ENCODE measurements at regions of chr21 and their contacts with region 1.

Region 1: GRCh38 chr21:42878993-42879787 is at the start of gene WDR4:
- DNase-seq: peak; percentile 95 to 100
- H3K4me3 ChIP-seq: peak within 1 kb of the TSS; percentile 69 to 93 (median 85)
- H3K27ac ChIP-seq: peak within 1 kb of the TSS; percentile 98
- H3K4me1 ChIP-seq: peaks cover 0 to 3% (median under 1%) of the 10 kb centered on the region in 4 experiments; a peak in 2 of 7 replicates
- H3K27me3 ChIP-seq: no peaks in the 10 kb centered on the region
- CTCF ChIP-seq: no peak
- EP300 ChIP-seq: no peak; a peak in 1 of 3 replicates
- POLR2A ChIP-seq: peak; percentile 85 to 99
- RAD21 ChIP-seq: no peak
- total RNA-seq, gene WDR4: 43.1 and 47.8 TPM in 2 replicates

Region 2: DNA sequence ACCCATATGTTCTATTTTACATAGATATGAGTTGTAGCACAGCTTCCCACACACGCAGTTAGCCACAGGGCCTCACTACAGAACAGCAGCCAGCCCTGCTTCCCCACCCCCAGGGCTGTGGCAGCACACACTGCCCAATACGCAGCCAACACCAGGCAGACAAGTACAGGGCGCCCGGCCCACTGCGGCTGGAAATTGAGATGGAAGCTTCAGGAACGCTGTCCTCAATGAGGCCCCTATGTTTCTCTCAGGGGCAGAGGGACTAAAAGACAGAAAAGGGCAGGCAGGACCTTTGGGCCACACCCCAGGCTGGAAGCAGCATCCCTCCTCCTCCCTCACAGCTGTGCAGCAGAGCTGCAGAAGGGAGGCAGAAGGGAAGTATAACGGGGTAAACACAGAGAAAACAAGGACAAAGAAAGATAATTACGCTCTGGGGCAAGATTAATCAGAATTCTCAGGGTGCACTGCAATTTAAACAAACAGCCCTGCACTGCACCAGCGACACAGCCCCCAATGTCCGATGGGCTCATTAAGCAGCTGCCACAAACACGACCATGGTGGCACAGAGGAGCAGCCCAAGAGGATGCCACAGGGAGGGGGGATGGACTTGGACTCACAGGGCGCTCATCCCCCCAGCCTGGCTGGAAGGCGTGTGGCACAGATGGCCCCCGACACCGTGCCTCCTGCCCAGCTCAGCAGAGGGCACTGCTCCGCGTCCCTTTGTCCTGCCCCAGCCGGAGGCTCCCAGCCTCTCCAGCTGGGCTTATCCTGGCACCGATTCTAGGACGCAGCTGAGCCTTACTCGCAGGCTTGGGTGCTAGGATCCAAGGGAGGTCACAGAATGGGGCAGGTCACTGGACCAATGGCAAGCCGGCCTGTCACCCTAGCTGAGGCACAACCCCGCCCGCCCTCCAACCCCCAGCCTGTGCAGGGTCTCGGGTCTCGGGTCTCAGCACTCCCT is 14.1 kb before region 1 on chr21:
- CTCF ChIA-PET with region 1: interaction called, 5 read pairs
- POLR2A ChIA-PET with region 1: interaction called, 23 read pairs
- DNase-seq: no peak
- H3K4me3 ChIP-seq: no peak overlapping the region
- H3K27ac ChIP-seq: no peak overlapping the region
- H3K4me1 ChIP-seq: no peaks in the 10 kb centered on the region; a peak in 1 of 7 replicates
- H3K27me3 ChIP-seq: no peaks in the 10 kb centered on the region
- CTCF ChIP-seq: peak in 1 of 3 experiments; percentile 15; a peak in 1 of 4 replicates
- EP300 ChIP-seq: no peak
- POLR2A ChIP-seq: no peak
- RAD21 ChIP-seq: no peak

Region 3: DNA sequence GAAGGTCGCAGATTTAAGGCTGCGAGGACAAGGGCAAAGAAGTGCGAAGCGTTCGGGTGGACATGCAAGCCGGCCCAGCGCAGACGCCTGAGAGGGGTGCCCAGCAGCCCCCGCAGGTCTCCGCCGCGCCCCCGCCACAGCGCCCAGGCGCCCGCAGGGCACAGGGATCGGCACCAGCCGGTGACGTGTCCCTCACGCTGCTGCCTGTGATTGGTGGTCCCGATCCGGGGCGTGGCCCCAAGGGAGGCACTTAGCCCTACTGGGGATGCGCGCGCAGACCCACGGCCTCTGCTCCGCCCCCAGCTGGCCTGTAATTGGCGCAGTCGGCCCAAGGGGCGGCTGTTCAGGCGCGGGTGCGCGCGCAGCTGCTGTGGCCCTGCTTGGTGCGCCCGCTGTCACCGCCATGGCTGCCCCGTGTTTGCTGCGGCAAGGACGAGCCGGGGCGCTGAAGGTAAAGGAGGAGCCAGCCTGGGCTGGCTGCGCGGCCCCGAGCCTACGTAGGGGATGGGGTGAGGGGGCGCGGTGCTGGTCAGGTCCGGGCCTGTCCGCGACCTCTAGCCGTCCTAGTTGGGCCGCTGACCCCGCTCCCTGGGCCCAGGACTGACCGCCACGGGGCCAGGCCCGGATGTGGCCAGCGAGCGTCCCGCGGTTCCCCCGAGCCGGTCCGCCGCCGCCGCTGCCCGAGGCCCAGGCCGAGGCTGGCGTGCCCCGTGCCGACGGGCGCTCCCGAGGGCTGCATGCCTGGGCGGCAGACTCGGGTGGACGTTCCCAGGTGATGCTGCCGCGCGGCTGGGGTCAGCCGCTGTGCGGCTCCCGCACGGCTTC is 14.0 kb after region 1 on chr21 and contains the start of gene NDUFV3:
- CTCF ChIA-PET with region 1: interaction called, 11 read pairs
- POLR2A ChIA-PET with region 1: interaction called, 41 read pairs
- DNase-seq: peak; percentile 96 to 98
- H3K4me3 ChIP-seq: peak within 1 kb of the TSS; percentile 67 to 92 (median 86)
- H3K27ac ChIP-seq: peak within 1 kb of the TSS; percentile 84; the same call in 1 of the 2 replicates
- H3K4me1 ChIP-seq: no peaks in the 10 kb centered on the region
- H3K27me3 ChIP-seq: no peaks in the 10 kb centered on the region
- CTCF ChIP-seq: no peak
- EP300 ChIP-seq: peak in 1 of 2 experiments; percentile 40; a peak in 1 of 3 replicates
- POLR2A ChIP-seq: peak; percentile 56 to 91
- RAD21 ChIP-seq: no peak
- total RNA-seq, gene NDUFV3: 44.4 and 47.1 TPM in 2 replicates

Measured in H1 (cell line).